ENCODE measurements at regions of chr10 and their contacts with region 1.

Region 1: DNA sequence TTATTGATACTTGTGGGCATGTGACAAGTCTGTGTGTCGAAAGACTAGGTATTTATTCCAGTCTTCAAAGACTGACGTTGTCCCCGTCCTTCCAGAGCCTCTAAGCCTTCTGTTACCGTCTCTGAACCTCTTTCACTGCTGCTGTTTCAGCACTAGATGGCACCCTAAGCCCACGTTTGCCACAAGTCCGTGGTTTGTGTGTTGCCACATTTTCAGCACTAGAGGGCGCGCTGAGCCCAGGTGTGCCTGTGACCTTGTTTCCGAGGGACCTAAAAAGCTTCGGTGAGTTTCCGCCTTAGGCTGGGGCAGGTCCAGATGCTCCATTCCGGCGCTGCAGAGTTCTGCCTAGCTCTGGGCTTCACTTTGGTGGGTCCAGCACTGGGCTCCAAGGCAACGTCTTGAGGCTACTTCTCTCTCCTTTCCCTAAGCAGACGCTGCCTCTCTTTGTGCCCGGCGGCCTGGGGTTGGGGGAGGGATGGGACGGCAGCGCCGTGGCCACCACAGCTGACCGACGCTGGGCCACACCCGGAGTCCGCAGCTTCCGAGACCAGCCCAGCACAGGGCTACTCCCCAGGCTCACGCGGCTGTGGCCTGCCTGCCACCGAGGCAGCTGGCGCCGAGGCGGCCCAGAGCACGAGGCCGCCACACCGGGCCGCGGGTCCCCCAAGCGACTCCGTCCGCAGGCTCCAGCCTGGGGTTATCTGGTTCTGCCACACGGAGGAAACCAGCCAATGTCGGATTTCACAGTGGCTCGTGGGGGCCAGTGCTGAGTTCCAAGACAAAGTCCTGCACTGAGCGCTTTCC is 520.2 kb downstream of the REEP3 start:
- DNase-seq: peak; percentile 84 to 90
- H3K4me3 ChIP-seq: no peak overlapping the region
- H3K4me3 Mint-ChIP-seq: no peak overlapping the region
- H3K27ac Mint-ChIP-seq: no peak overlapping the region
- H3K4me1 ChIP-seq: no peaks in the 10 kb centered on the region
- H3K4me1 Mint-ChIP-seq: no peaks in the 10 kb centered on the region
- H3K27me3 ChIP-seq: no peaks in the 10 kb centered on the region; the same call in 1 of the 2 replicates
- H3K27me3 Mint-ChIP-seq: peaks cover 6% of the 10 kb centered on the region
- CTCF ChIP-seq: peak; percentile 100

Region 2: DNA sequence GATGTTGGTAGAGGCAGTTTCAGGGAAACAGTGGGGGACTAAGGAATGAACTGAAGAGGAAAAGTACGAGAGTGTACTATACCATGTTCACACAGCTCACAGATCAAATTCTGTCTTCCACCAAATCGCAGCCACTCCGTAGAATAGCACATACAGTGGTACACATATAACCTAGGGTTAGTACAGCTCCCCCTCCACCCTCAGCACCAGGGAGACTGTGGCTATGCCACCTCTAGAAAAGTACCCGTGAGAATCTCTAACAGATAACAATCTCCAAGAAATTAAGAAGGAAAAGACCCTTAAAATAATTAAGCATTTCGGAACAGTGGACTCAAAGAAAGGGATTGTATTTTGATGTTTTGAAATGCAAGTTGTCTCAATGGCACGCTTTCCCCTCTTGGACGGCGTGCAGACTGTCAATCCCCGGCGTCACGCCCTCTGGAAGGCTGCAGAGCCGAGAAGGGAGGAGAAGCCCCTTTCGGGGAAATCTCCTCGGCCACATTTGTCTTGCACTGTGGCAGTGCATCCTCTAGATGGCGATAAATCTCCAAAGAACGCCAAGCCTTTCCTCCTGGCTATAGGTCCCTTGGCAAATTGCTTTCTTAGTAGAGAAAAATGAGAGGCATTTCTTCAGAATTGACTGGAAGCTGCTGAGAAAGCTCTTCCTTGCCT is 175.2 kb before region 1 on chr10:
- CTCF ChIA-PET with region 1: interaction called, 5 read pairs
- POLR2A ChIA-PET with region 1: no interaction called
- intact Hi-C with region 1: loop called (anchors 2 kb)
- DNase-seq: peak; percentile 71 to 80
- H3K4me3 ChIP-seq: no peak overlapping the region
- H3K4me3 Mint-ChIP-seq: peak overlapping the region; percentile 25
- H3K27ac Mint-ChIP-seq: no peak overlapping the region
- H3K4me1 ChIP-seq: peaks cover 7% of the 10 kb centered on the region; the same call in 1 of the 2 replicates
- H3K4me1 Mint-ChIP-seq: peaks cover 16% of the 10 kb centered on the region
- H3K27me3 ChIP-seq: peaks cover 2% of the 10 kb centered on the region
- H3K27me3 Mint-ChIP-seq: peaks cover 17% of the 10 kb centered on the region
- CTCF ChIP-seq: peak; percentile 87 to 96

Region 3: GRCh38 chr10:64023926-64024470 is 17.4 kb before region 1 on chr10:
- CTCF ChIA-PET with region 1: no interaction called
- POLR2A ChIA-PET with region 1: no interaction called
- intact Hi-C with region 1: no loop called
- DNase-seq: no peak
- H3K4me3 ChIP-seq: no peak overlapping the region
- H3K4me3 Mint-ChIP-seq: no peak overlapping the region
- H3K27ac Mint-ChIP-seq: no peak overlapping the region
- H3K4me1 ChIP-seq: no peaks in the 10 kb centered on the region
- H3K4me1 Mint-ChIP-seq: no peaks in the 10 kb centered on the region
- H3K27me3 ChIP-seq: no peaks in the 10 kb centered on the region; the same call in 1 of the 2 replicates
- H3K27me3 Mint-ChIP-seq: peaks cover 6% of the 10 kb centered on the region
- CTCF ChIP-seq: no peak

Region 4: GRCh38 chr10:64091897-64092296 is 50.5 kb after region 1 on chr10:
- CTCF ChIA-PET with region 1: interaction called, 4 read pairs
- POLR2A ChIA-PET with region 1: no interaction called
- intact Hi-C with region 1: loop called (anchors 2 kb)
- DNase-seq: peak; percentile 48 to 53
- H3K4me3 ChIP-seq: no peak overlapping the region
- H3K4me3 Mint-ChIP-seq: no peak overlapping the region
- H3K27ac Mint-ChIP-seq: no peak overlapping the region
- H3K4me1 ChIP-seq: no peaks in the 10 kb centered on the region
- H3K4me1 Mint-ChIP-seq: no peaks in the 10 kb centered on the region
- H3K27me3 ChIP-seq: no peaks in the 10 kb centered on the region
- H3K27me3 Mint-ChIP-seq: no peaks in the 10 kb centered on the region
- CTCF ChIP-seq: peak; percentile 61 to 66

Region 5: DNA sequence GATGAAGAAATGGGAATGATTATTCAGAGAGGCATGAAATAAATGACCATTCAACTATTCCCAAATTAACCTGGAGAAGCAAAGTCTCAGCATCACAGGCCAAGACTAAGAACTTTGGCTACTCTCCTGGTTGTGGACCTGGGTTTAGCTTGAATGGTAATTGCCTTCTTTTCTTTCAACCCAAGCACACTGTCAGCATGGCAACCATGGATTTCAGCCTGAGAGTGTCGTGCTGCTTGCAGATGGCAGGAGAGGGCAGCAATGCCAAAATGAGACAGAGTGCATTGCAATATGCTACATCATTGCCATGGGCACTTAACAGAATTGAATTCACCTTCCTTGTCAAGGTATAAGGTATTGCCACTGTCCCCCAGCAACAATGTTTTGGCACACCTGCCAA is 247.0 kb after region 1 on chr10:
- CTCF ChIA-PET with region 1: no interaction called
- POLR2A ChIA-PET with region 1: no interaction called
- intact Hi-C with region 1: loop called (anchors 1 kb)
- DNase-seq: no peak
- H3K4me3 ChIP-seq: no peak overlapping the region
- H3K4me3 Mint-ChIP-seq: no peak overlapping the region
- H3K27ac Mint-ChIP-seq: no peak overlapping the region
- H3K4me1 ChIP-seq: no peaks in the 10 kb centered on the region
- H3K4me1 Mint-ChIP-seq: no peaks in the 10 kb centered on the region
- H3K27me3 ChIP-seq: 0 out of 2 replicates have a peak, but pooled peaks cover 3% of the 10 kb centered on the region
- H3K27me3 Mint-ChIP-seq: peaks cover 3% of the 10 kb centered on the region
- CTCF ChIP-seq: no peak

Region 6: GRCh38 chr10:64379898-64380297 is 338.5 kb after region 1 on chr10:
- CTCF ChIA-PET with region 1: interaction called, 10 read pairs
- POLR2A ChIA-PET with region 1: no interaction called
- intact Hi-C with region 1: loop called (anchors 1 kb)
- DNase-seq: peak; percentile 62 to 68
- H3K4me3 ChIP-seq: no peak overlapping the region
- H3K4me3 Mint-ChIP-seq: no peak overlapping the region
- H3K27ac Mint-ChIP-seq: no peak overlapping the region
- H3K4me1 ChIP-seq: peaks cover 7% of the 10 kb centered on the region
- H3K4me1 Mint-ChIP-seq: peaks cover 6% of the 10 kb centered on the region
- H3K27me3 ChIP-seq: no peaks in the 10 kb centered on the region
- H3K27me3 Mint-ChIP-seq: no peaks in the 10 kb centered on the region
- CTCF ChIP-seq: peak; percentile 60 to 80

Region 7: DNA sequence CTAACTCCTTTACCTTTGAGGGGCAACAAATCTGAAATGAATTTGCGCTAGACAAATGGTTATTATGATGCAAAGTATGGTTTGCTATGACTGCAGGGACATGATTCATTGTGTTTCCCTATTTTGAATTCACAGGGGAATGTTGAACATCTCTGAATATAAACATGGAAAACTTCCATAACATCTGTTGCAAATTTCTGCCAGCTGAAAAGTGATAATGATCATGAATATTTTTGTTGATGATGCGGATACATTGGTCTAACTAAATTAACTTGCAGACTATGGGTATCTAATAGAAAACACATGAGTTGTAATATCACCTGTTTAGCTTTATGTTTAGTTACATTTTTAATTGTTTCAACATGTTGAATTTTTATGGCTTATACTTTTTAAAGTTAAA is 805.3 kb after region 1 on chr10:
- CTCF ChIA-PET with region 1: no interaction called
- POLR2A ChIA-PET with region 1: no interaction called
- intact Hi-C with region 1: loop called (anchors 10 kb)
- DNase-seq: no peak
- H3K4me3 ChIP-seq: no peak overlapping the region
- H3K4me3 Mint-ChIP-seq: no peak overlapping the region
- H3K27ac Mint-ChIP-seq: no peak overlapping the region
- H3K4me1 ChIP-seq: no peaks in the 10 kb centered on the region
- H3K4me1 Mint-ChIP-seq: no peaks in the 10 kb centered on the region
- H3K27me3 ChIP-seq: no peaks in the 10 kb centered on the region
- H3K27me3 Mint-ChIP-seq: no peaks in the 10 kb centered on the region
- CTCF ChIP-seq: no peak